PC-9 (cell line): ENCODE measurements at regions of chrX and their contacts with region 1.

Region 1: GRCh38 chrX:76253432-76253831 is 80.6 kb downstream of the PBDC1 start:
- DNase-seq: peak in 1 of 2 experiments; percentile 3
- H3K4me3 ChIP-seq: no peak overlapping the region
- H3K27ac ChIP-seq: no peak overlapping the region
- H3K4me1 ChIP-seq: no peaks in the 10 kb centered on the region
- H3K27me3 ChIP-seq: no peaks in the 10 kb centered on the region
- CTCF ChIP-seq: peak; percentile 58

Region 2: GRCh38 chrX:75642811-75643361 is 610.5 kb before region 1 on chrX:
- CTCF ChIA-PET with region 1: no interaction called
- POLR2A ChIA-PET with region 1: no interaction called
- intact Hi-C with region 1: no loop called
- DNase-seq: no peak
- H3K4me3 ChIP-seq: no peak overlapping the region
- H3K27ac ChIP-seq: no peak overlapping the region
- H3K4me1 ChIP-seq: no peaks in the 10 kb centered on the region
- H3K27me3 ChIP-seq: no peaks in the 10 kb centered on the region
- CTCF ChIP-seq: no peak

Region 3: DNA sequence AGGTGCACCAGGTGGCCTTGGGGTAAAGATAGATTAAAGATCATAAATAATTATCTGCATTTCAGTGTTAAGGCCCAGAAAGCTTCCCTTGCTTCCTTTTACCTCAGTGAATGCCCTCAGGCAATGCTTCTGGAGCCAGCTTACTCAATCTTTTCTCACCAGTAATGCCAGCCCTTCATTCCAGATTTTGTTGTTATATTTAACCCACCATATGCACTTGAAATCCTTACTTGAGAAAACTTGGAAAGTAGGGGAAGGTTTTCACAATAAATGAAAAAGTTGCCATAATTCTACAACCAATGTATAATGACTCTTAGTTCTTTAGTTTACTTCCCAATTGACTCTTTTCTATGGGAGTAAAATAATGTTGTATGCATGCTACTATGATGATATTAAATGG is 97.6 kb before region 1 on chrX:
- CTCF ChIA-PET with region 1: no interaction called
- POLR2A ChIA-PET with region 1: no interaction called
- intact Hi-C with region 1: loop called (anchors 5 kb)
- DNase-seq: peak in 1 of 2 experiments; percentile 39
- H3K4me3 ChIP-seq: no peak overlapping the region
- H3K27ac ChIP-seq: no peak overlapping the region
- H3K4me1 ChIP-seq: no peaks in the 10 kb centered on the region
- H3K27me3 ChIP-seq: 0 out of 2 replicates have a peak, but pooled peaks cover 3% of the 10 kb centered on the region
- CTCF ChIP-seq: no peak